Activated CD4-positive, alpha-beta T cell treated with anti-CD3 and anti-CD28 coated beads, Interleukin-2, amount 10 ng/mL, durations not matched to agents 7 days and 5 days (primary cell): ENCODE measurements at regions of chr5 and their contacts with region 1.

Region 1: DNA sequence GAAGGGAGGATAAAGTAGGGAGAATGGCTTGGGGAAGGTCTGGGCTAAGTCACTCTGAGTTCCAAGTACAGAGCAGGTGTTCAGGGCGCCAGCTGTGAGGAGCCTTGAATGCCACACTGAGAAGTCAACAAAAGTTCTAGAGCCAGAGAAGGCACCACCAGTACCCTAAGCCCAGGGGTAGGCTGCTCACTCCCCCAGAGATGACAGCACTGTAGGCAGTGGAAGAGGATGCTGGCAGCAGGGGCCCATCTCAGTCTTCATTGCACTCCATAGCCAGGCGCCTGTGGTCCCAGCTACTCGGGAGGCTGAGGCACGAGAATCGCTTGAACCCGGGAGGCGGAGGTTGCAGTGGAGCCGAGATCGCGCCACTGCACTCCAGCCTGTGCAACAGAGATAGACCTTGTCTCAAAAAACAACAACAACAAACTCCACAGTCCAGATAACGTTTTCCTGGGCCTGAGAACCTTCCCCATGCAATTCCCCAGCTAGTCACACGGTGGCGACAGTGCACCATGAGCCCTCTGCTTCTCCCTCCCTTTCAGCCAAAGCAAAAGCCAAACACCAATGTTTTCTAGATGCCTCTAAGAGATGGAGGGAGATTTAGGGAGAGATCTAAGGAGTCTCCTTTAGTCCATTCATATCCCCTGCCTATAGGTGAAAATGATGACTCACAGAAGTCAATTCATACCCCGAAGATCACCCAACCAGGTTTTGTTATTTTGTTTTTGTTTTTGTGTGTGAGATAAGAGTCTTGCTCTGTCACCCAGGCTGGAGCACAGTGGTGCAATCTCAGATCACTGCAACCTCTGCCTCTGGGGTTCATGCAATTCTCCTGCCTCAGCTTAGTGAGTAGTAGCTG is 19.8 kb upstream of the NSD1 start:
- DNase-seq: peak; percentile 81
- H3K4me3 Mint-ChIP-seq: no peak overlapping the region
- H3K27ac Mint-ChIP-seq: peak overlapping the region; percentile 68
- H3K4me1 Mint-ChIP-seq: peaks cover 37% of the 10 kb centered on the region
- H3K27me3 Mint-ChIP-seq: no peaks in the 10 kb centered on the region

Region 2: GRCh38 chr5:177086924-177087706 is 26.7 kb before region 1 on chr5:
- CTCF ChIA-PET with region 1: interaction called, 27 read pairs
- POLR2A ChIA-PET with region 1: no interaction called
- DNase-seq: peak; percentile 53
- H3K4me3 Mint-ChIP-seq: no peak overlapping the region
- H3K27ac Mint-ChIP-seq: no peak overlapping the region
- H3K4me1 Mint-ChIP-seq: peaks cover 10% of the 10 kb centered on the region
- H3K27me3 Mint-ChIP-seq: peaks cover 36% of the 10 kb centered on the region

Region 3: GRCh38 chr5:177133091-177133852 is 19.5 kb after region 1 on chr5 and contains the start of gene NSD1:
- CTCF ChIA-PET with region 1: interaction called, 14 read pairs
- POLR2A ChIA-PET with region 1: no interaction called
- DNase-seq: peak; percentile 89
- H3K4me3 Mint-ChIP-seq: peak within 1 kb of the TSS; percentile 87
- H3K27ac Mint-ChIP-seq: peak within 1 kb of the TSS; percentile 94
- H3K4me1 Mint-ChIP-seq: peaks cover 58% of the 10 kb centered on the region
- H3K27me3 Mint-ChIP-seq: no peaks in the 10 kb centered on the region
- total RNA-seq, gene NSD1: 83.2 to 92.9 TPM